Activated CD4-positive, alpha-beta T cell treated with anti-CD3 and anti-CD28 coated beads for 36 hours (primary cell): ENCODE measurements at regions of chr6 and their contacts with region 1.

Region 1: GRCh38 chr6:167219967-167220512 is 62.3 kb upstream of the GPR31 start:
- DNase-seq: no peak
- ATAC-seq: no peak
- H3K4me3 Mint-ChIP-seq: no peak overlapping the region
- H3K27ac Mint-ChIP-seq: no peak overlapping the region
- H3K4me1 Mint-ChIP-seq: no peaks in the 10 kb centered on the region
- H3K27me3 Mint-ChIP-seq: peaks cover 2% of the 10 kb centered on the region

Region 2: GRCh38 chr6:167130008-167130677 is 89.9 kb before region 1 on chr6:
- CTCF ChIA-PET with region 1: no interaction called
- POLR2A ChIA-PET with region 1: no interaction called
- intact Hi-C with region 1: no loop called
- DNase-seq: no peak
- ATAC-seq: peak; percentile 30
- H3K4me3 Mint-ChIP-seq: no peak overlapping the region
- H3K27ac Mint-ChIP-seq: no peak overlapping the region
- H3K4me1 Mint-ChIP-seq: peaks cover 10% of the 10 kb centered on the region
- H3K27me3 Mint-ChIP-seq: no peaks in the 10 kb centered on the region

Region 3: GRCh38 chr6:167244064-167244960 is 24.3 kb after region 1 on chr6:
- CTCF ChIA-PET with region 1: no interaction called
- POLR2A ChIA-PET with region 1: no interaction called
- intact Hi-C with region 1: no loop called
- DNase-seq: no peak
- ATAC-seq: no peak
- H3K4me3 Mint-ChIP-seq: no peak overlapping the region
- H3K27ac Mint-ChIP-seq: no peak overlapping the region
- H3K4me1 Mint-ChIP-seq: no peaks in the 10 kb centered on the region
- H3K27me3 Mint-ChIP-seq: peaks cover 6% of the 10 kb centered on the region

Region 4: GRCh38 chr6:167285077-167285770 is 65.2 kb after region 1 on chr6:
- CTCF ChIA-PET with region 1: interaction called, 5 read pairs
- POLR2A ChIA-PET with region 1: no interaction called
- intact Hi-C with region 1: loop called (anchors 1 kb)
- DNase-seq: no peak
- ATAC-seq: no peak
- H3K4me3 Mint-ChIP-seq: no peak overlapping the region
- H3K27ac Mint-ChIP-seq: no peak overlapping the region
- H3K4me1 Mint-ChIP-seq: no peaks in the 10 kb centered on the region
- H3K27me3 Mint-ChIP-seq: no peaks in the 10 kb centered on the region

Region 5: DNA sequence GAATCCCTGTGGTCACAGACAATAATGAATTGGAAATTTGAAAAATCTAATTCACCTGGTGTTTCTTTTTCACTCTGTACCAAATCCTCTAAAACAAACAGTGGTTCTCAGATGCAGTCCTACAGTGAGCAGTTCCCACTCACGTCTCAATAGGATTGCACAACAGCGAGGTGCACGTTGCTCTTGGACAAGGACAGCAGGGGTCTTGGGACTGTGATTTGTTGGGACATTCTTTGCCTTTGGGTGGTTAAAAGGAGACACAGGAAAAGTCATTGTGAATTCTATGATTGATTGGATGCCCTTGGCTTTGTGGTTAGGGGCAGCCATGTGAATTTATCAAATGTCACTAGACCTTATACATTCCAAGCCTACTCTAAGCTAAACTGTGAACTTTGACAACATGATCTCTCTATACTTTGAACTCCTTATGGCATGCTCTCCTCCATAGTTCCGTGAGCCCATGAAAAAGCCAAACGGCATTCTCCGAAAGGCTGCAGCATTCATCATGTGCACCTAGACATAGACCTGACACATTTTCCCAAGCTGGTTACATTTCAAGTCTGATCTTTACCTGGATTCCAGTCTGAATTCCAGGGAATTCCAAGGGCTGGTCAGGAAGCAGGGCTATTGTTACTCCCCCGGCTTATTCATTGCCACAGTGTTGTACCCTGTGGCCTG is 71.7 kb after region 1 on chr6:
- CTCF ChIA-PET with region 1: interaction called, 5 read pairs
- POLR2A ChIA-PET with region 1: no interaction called
- intact Hi-C with region 1: loop called in 1 of 2 experiments (anchors 2 kb)
- DNase-seq: no peak
- ATAC-seq: no peak
- H3K4me3 Mint-ChIP-seq: no peak overlapping the region
- H3K27ac Mint-ChIP-seq: no peak overlapping the region
- H3K4me1 Mint-ChIP-seq: no peaks in the 10 kb centered on the region
- H3K27me3 Mint-ChIP-seq: peaks cover 2% of the 10 kb centered on the region

Region 6: DNA sequence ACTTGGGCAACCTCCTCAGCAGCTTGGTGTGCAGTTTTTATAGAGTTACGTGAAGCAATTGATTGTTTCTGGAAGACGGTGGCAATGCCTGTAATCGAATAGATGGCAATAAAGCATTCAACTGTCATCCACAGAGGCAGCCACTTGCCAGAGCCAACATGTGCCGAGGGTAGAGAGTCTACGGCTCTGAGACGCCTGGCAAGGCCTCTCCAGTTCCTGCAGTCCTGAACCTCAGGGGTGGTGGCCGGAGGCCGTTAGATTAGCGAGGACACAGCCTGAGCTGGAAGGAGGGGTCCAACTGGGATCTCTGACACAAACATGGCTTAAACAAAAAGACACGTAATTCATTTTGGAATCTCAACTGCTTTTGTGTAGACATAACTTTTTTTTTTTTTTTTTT is 104.1 kb after region 1 on chr6:
- CTCF ChIA-PET with region 1: no interaction called
- POLR2A ChIA-PET with region 1: no interaction called
- intact Hi-C with region 1: no loop called
- DNase-seq: no peak
- ATAC-seq: no peak
- H3K4me3 Mint-ChIP-seq: no peak overlapping the region
- H3K27ac Mint-ChIP-seq: no peak overlapping the region
- H3K4me1 Mint-ChIP-seq: peaks cover 7% of the 10 kb centered on the region
- H3K27me3 Mint-ChIP-seq: peaks cover 5% of the 10 kb centered on the region